ENCODE measurements at regions of chr16 and their contacts with region 1.

Region 1: GRCh38 chr16:84511180-84511824 is 6.8 kb upstream of the MEAK7 start:
- DNase-seq: peak; percentile 55 to 88 (median 79)
- ATAC-seq: peak; percentile 62
- H3K4me3 ChIP-seq: no peak overlapping the region
- H3K4me3 Mint-ChIP-seq: peak overlapping the region in 9 of 10 donors; percentile 11 to 71 (median 62)
- H3K27ac ChIP-seq: no peak overlapping the region
- H3K27ac Mint-ChIP-seq: peak overlapping the region; percentile 55 to 94 (median 82)
- H3K4me1 ChIP-seq: peaks cover 53 to 77% of the 10 kb centered on the region in 2 donors
- H3K4me1 Mint-ChIP-seq: peaks cover 48 to 79% (median 74%) of the 10 kb centered on the region in 7 donors
- H3K27me3 ChIP-seq: no peaks in the 10 kb centered on the region
- H3K27me3 Mint-ChIP-seq: no peaks in the 10 kb centered on the region

Region 2: GRCh38 chr16:84548971-84549844 is 37.9 kb after region 1 on chr16:
- CTCF ChIA-PET with region 1: interaction called, 8 read pairs
- POLR2A ChIA-PET with region 1: interaction called, 29 read pairs
- intact Hi-C with region 1: loop called (anchors 1 kb)
- DNase-seq: peak in 8 of 9 donors; percentile 42 to 64 (median 60)
- ATAC-seq: peak; percentile 69
- H3K4me3 ChIP-seq: peak overlapping the region; percentile 65
- H3K4me3 Mint-ChIP-seq: peak overlapping the region; percentile 81 to 95 (median 90)
- H3K27ac ChIP-seq: peak overlapping the region; percentile 75
- H3K27ac Mint-ChIP-seq: peak overlapping the region; percentile 91 to 100 (median 96)
- H3K4me1 ChIP-seq: peaks cover 41 to 45% of the 10 kb centered on the region in 2 donors
- H3K4me1 Mint-ChIP-seq: peaks cover 38 to 70% (median 67%) of the 10 kb centered on the region in 7 donors
- H3K27me3 ChIP-seq: no peaks in the 10 kb centered on the region
- H3K27me3 Mint-ChIP-seq: no peaks in the 10 kb centered on the region

Region 3: GRCh38 chr16:84593825-84594724 is 82.8 kb after region 1 on chr16:
- CTCF ChIA-PET with region 1: interaction called, 8 read pairs
- POLR2A ChIA-PET with region 1: interaction called, 38 read pairs
- intact Hi-C with region 1: loop called in 1 of 2 experiments (anchors 1 kb)
- DNase-seq: peak; percentile 47 to 82 (median 73)
- ATAC-seq: peak; percentile 92
- H3K4me3 ChIP-seq: peak overlapping the region; percentile 41
- H3K4me3 Mint-ChIP-seq: peak overlapping the region; percentile 67 to 85 (median 79)
- H3K27ac ChIP-seq: peak overlapping the region; percentile 73
- H3K27ac Mint-ChIP-seq: peak overlapping the region; percentile 88 to 98 (median 96)
- H3K4me1 ChIP-seq: peaks cover 53 to 60% of the 10 kb centered on the region in 2 donors
- H3K4me1 Mint-ChIP-seq: peaks cover 46 to 75% (median 64%) of the 10 kb centered on the region in 7 donors
- H3K27me3 ChIP-seq: no peaks in the 10 kb centered on the region
- H3K27me3 Mint-ChIP-seq: peaks cover 0 to 4% (median 0%) of the 10 kb centered on the region in 5 donors

Region 4: GRCh38 chr16:84726079-84726668 is 214.9 kb after region 1 on chr16:
- CTCF ChIA-PET with region 1: interaction called, 29 read pairs
- POLR2A ChIA-PET with region 1: interaction called, 5 read pairs
- intact Hi-C with region 1: loop called (anchors 1 kb)
- DNase-seq: peak; percentile 61 to 83 (median 74)
- ATAC-seq: peak; percentile 92
- H3K4me3 ChIP-seq: no peak overlapping the region
- H3K4me3 Mint-ChIP-seq: peak overlapping the region in 8 of 10 donors; percentile 54 to 76 (median 60)
- H3K27ac ChIP-seq: no peak overlapping the region
- H3K27ac Mint-ChIP-seq: peak overlapping the region in 4 of 9 donors; percentile 6 to 41 (median 31)
- H3K4me1 ChIP-seq: peaks cover 8 to 26% of the 10 kb centered on the region in 2 donors
- H3K4me1 Mint-ChIP-seq: peaks cover 55 to 83% (median 69%) of the 10 kb centered on the region in 7 donors
- H3K27me3 ChIP-seq: no peaks in the 10 kb centered on the region
- H3K27me3 Mint-ChIP-seq: no peaks in the 10 kb centered on the region

Region 5: DNA sequence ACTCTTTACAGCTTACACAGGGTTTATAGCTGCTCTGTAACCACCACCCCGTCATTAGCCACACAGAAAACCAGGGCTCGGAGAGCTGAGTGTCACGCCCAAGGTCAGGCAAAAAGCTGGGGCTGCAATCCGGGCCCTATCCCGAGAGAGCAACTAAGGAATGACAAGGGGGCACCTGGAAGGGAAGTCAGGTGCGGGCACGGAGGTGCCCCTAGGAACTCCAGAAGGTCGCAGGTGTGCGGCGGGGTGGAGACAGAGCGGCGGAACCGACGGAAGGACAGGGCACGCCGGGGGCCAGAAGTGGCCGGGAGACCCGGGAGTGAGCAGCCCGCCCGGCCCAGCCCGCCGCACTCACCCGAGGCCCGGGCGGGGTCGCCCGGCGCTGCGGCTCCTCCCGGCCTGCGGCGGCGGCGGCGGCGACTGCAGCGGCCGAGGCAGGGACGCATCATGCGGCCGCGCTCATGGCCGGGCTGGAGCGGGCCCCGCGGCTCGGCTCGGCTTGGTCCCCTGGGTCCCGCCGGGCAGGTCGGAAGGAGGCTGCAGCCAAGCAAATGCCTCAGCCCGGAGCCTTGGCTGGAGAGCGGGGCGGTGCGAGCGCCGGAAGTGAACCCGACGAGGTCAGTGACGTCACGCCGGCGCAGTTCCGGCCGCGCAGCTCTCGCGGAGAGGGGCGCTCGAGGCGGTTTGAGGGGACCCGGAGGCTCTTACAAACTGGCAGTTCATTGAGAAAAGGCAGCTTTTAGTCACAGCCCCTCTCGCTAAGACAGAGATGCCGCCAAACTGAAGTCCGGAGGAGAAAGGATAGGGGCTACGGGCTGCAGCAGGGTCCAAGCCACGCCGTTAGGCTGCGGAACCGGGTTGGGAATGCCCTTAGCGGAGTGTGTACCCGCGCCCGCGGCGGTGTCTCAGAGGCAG is 499.9 kb after region 1 on chr16 and contains the start of gene ZDHHC7:
- CTCF ChIA-PET with region 1: no interaction called
- POLR2A ChIA-PET with region 1: no interaction called
- intact Hi-C with region 1: loop called in 1 of 2 experiments (anchors 5 kb)
- DNase-seq: peak; percentile 76 to 87 (median 85)
- ATAC-seq: peak; percentile 96
- H3K4me3 ChIP-seq: peak within 1 kb of the TSS; percentile 99
- H3K4me3 Mint-ChIP-seq: peak within 1 kb of the TSS; percentile 94 to 100 (median 98)
- H3K27ac ChIP-seq: peak within 1 kb of the TSS; percentile 92
- H3K27ac Mint-ChIP-seq: peak within 1 kb of the TSS; percentile 95 to 100 (median 99)
- H3K4me1 ChIP-seq: peaks cover 14 to 16% of the 10 kb centered on the region in 2 donors
- H3K4me1 Mint-ChIP-seq: peaks cover 27 to 59% (median 43%) of the 10 kb centered on the region in 7 donors
- H3K27me3 ChIP-seq: no peaks in the 10 kb centered on the region
- H3K27me3 Mint-ChIP-seq: peaks cover 0 to 5% (median 0%) of the 10 kb centered on the region in 5 donors
- total RNA-seq, gene ZDHHC7: 31.7 to 62.2 (median 33.4) TPM